Activated CD4-positive, alpha-beta T cell treated with anti-CD3 and anti-CD28 coated beads, Interleukin-2, amount 10 ng/mL, durations not matched to agents 24 days and 14 days (primary cell): ENCODE measurements at regions of chrX and their contacts with region 1.

Region 1: DNA sequence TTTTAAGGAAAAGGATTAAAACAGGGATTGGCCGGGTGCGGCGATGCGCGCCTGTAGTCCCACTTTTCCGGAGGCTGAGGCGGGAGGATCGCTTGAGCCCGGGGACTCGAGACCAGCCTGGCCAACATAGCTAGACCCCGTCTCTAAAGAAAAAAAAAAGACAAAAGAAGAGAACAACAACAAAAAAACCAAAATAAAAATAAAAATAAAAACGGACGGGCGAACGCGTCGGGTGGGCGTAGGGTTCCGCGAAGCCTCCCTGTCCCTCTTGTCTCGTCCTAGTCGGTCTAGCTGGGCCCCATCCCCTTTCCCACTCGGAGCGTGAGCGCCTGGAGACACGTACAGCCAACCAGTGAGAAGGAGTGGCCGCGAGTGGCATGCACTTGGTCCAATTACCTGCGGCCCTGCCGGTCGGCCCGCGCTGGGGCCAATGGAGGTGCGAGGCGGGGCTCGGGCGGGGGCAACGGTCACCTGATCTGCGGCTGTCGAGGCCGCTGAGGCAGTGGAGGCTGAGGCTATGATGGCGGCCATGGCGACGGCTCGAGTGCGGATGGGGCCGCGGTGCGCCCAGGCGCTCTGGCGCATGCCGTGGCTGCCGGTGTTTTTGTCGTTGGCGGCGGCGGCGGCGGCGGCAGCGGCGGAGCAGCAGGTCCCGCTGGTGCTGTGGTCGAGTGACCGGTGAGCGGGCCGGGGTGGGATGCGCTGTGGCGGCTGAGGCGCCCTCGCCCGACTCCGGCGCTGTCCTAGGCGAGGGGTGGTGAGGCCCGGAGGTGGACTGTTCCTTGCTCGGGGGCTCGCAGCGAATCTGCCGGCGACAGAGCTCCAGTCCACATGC is at the start of gene ATP6AP1:
- DNase-seq: peak; percentile 96
- H3K4me3 Mint-ChIP-seq: peak within 1 kb of the TSS; percentile 84
- H3K27ac Mint-ChIP-seq: peak within 1 kb of the TSS; percentile 75
- H3K4me1 Mint-ChIP-seq: peaks cover 25% of the 10 kb centered on the region
- H3K27me3 Mint-ChIP-seq: no peaks in the 10 kb centered on the region
- total RNA-seq, gene ATP6AP1: 43.5 and 43.6 TPM in 2 replicates

Region 2: GRCh38 chrX:154411981-154412340 is 16.4 kb before region 1 on chrX:
- intact Hi-C with region 1: loop called (anchors 1 kb)
- DNase-seq: peak; percentile 85
- H3K4me3 Mint-ChIP-seq: peak overlapping the region; percentile 84
- H3K27ac Mint-ChIP-seq: peak overlapping the region; percentile 82
- H3K4me1 Mint-ChIP-seq: peaks cover 11% of the 10 kb centered on the region
- H3K27me3 Mint-ChIP-seq: no peaks in the 10 kb centered on the region

Region 3: GRCh38 chrX:154443992-154444754 is 15.8 kb after region 1 on chrX and contains the start of gene FAM50A:
- intact Hi-C with region 1: no loop called
- DNase-seq: peak; percentile 93
- H3K4me3 Mint-ChIP-seq: peak within 1 kb of the TSS; percentile 80
- H3K27ac Mint-ChIP-seq: peak within 1 kb of the TSS; percentile 80
- H3K4me1 Mint-ChIP-seq: peaks cover 8% of the 10 kb centered on the region
- H3K27me3 Mint-ChIP-seq: no peaks in the 10 kb centered on the region
- total RNA-seq, gene FAM50A: 85.4 and 85.9 TPM in 2 replicates